AG04450 (cell line): ENCODE measurements at regions of chr3 and their contacts with region 1.

Region 1: DNA sequence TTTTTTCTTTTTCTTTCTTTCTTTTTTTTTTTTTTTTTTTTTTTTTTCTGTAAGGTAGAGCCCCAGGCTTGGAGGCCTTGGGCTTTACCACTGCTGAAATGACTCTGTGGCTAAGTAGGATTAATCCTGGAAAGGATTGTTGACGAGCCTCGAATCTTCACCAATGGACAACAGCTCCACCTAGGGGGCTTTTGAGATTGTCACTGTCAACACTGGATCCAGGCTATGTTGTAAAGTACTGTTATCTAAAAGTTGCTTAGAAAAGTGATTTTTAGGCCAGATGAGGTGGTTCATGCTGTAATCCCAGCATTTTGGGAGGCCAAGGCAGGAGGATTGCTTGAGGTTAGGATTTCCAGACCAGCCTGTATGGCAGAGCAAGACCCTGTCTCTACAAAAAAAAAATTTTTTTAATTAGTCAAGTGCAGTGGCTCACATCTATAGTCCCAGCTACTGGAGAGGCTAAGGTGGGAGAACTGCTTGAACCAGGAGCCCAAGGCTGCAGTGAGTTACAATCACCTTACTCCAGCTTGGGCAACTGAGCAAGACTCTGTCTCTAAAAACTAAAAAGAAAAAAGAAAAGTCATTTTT is 41.6 kb downstream of the KLHL18 start:
- DNase-seq: peak; percentile 50
- H3K4me3 ChIP-seq: no peak overlapping the region
- H3K27ac ChIP-seq: no peak overlapping the region
- H3K27me3 ChIP-seq: no peaks in the 10 kb centered on the region
- CTCF ChIP-seq: peak; percentile 80

Region 2: DNA sequence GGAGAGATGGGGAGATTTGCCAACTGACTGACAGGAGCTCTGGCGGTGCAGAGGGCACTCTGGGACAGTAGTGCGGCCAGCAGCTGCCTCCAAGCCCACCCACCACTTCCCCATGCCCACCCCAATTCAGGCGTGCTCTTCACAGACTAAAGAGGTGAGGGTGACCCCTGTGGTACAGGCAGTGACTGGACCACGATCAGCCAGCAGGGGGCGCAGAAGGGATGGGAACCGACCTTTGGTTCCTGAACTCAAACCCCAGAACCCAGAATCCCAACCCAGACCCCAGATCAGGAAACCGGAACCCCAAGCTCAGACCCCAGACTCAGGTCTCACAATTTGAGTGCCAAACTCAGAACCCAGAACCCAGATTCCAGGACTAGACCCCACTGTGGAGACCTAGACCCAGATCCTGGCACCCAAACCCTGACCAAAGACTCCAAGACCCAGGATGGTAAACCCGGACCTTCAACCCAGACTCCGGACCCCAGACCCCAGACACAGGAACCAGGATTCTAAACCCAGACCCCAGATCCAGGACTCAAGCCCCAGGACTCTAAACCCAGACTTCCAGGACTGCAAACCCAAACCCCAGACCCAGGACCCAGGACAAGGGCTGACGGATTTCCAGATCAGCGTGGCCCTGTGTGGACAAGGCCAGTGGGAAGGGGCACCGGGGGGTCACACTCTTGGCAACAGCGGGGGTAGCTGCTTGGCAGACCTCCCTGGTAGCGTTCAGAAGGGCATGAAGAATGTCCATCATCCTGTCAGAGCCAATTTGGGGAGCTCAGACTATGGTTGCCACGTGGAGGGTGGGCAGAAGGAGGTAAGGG is 457.4 kb before region 1 on chr3:
- CTCF ChIA-PET with region 1: interaction called, 14 read pairs
- POLR2A ChIA-PET with region 1: no interaction called
- DNase-seq: no peak
- H3K4me3 ChIP-seq: no peak overlapping the region
- H3K27ac ChIP-seq: no peak overlapping the region
- H3K27me3 ChIP-seq: peaks cover 46% of the 10 kb centered on the region
- CTCF ChIP-seq: peak; percentile 90

Region 3: GRCh38 chr3:46929324-46929723 is 395.0 kb before region 1 on chr3:
- CTCF ChIA-PET with region 1: interaction called, 32 read pairs
- POLR2A ChIA-PET with region 1: no interaction called
- DNase-seq: no peak
- H3K4me3 ChIP-seq: no peak overlapping the region
- H3K27ac ChIP-seq: no peak overlapping the region
- H3K27me3 ChIP-seq: no peaks in the 10 kb centered on the region
- CTCF ChIP-seq: no peak

Region 4: GRCh38 chr3:47096959-47097358 is 227.4 kb before region 1 on chr3:
- CTCF ChIA-PET with region 1: interaction called, 5 read pairs
- POLR2A ChIA-PET with region 1: interaction called, 10 read pairs
- DNase-seq: no peak
- H3K4me3 ChIP-seq: no peak overlapping the region
- H3K27ac ChIP-seq: peak overlapping the region; percentile 54
- H3K27me3 ChIP-seq: no peaks in the 10 kb centered on the region
- CTCF ChIP-seq: no peak

Region 5: DNA sequence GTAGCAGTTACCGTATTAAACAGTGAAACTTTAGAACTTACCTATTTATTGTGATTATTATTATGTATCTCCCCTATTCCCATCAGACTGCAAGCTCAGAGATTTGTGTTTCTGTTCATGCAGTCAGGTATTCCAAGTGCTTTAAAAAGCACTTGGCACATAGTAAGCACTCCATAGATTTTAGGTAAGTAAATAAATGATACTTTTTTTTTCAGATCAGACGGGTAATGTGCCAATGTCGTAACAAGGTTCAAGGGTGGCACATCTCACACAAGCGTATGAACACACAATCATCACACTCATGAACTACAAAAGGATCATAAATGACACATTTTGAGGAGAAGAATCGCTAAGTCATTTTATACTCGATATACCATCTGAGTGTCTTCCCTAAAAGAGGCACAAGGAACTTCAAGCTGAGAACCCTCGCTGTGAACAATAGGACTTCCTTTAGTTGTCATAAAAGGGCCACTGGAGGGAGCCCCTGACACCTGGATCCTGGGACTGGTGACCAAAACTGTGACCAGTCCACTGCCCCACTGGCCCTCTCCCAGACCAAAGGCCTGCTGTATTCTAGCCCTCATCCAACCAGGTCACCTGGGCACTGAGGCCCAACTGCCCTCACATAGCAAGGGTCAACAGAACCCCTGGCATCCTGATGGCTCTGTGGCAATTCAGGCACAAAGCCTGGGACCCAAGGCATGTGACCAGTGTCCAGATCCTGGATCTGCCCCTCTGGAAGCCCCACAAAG is 73.9 kb before region 1 on chr3:
- CTCF ChIA-PET with region 1: interaction called, 11 read pairs
- POLR2A ChIA-PET with region 1: no interaction called
- DNase-seq: no peak
- H3K4me3 ChIP-seq: no peak overlapping the region
- H3K27ac ChIP-seq: no peak overlapping the region
- H3K27me3 ChIP-seq: peaks cover 8% of the 10 kb centered on the region
- CTCF ChIP-seq: peak; percentile 40